ENCODE measurements at regions of chr22 and their contacts with region 1.

Region 1: DNA sequence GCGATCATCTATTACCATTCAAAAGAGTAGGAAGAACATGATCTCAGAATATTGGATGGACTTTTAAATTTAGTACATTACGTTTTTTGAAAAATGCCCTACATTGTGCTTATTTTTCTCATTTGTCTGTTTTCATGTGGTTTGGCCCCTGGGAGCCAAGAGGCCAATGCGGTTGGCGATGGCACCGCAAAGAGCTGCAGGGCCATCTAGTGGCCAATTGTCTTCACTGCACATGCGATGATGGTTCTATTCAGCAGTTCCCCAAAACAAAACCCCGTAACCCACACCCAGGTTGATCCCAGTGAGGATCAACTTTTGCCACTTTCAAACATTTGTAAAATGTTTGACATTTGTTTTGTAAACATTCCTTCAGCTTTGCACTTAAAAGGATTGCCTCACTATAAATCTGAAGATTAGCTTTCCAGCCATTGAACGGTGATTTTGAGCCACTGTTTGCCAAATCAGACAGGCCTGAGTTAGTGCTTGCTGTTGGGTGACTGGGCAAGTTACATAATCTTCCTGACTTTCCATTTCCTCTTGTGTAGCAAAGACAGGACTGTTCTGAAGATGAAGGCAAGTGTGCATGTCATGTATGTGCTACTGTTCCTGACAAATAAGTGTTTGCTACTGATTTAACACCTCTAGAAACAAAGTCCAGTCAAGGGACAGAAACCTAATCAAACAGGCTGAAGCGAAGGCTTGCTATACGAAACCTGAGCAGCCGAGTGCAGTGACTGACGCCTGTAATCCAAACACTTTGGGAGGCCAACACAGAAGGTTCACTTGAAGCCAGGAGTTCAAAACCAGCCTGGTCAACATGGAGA is 29.2 kb upstream of the XBP1 start:
- DNase-seq: peak; percentile 83
- CTCF ChIP-seq: peak; percentile 93

Region 2: DNA sequence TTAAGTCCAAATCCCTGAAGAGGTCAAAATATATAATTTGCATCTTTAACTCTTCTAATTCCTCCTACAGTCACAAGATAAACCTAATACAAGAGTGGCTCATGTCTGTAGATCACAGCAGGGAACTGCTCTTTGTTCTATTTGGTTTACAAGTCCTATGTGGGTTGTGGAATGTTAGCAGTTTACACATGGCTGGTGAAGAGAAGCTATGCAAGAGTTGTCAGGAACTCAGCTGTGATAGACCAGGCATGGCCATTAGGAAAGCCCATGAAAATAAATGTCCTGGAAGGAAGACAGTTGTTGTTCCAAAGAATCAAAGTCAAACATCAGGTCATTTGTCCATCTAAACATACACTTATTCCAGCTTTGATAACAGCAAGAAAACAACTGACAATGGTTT is 598.1 kb before region 1 on chr22:
- CTCF ChIA-PET with region 1: no interaction called
- POLR2A ChIA-PET with region 1: no interaction called
- DNase-seq: no peak
- CTCF ChIP-seq: no peak

Region 3: GRCh38 chr22:28594797-28595462 is 234.6 kb before region 1 on chr22:
- CTCF ChIA-PET with region 1: interaction called, 79 read pairs
- POLR2A ChIA-PET with region 1: no interaction called
- DNase-seq: peak; percentile 41
- CTCF ChIP-seq: peak; percentile 58

Region 4: GRCh38 chr22:28607795-28608194 is 221.8 kb before region 1 on chr22:
- CTCF ChIA-PET with region 1: interaction called, 24 read pairs
- POLR2A ChIA-PET with region 1: no interaction called
- DNase-seq: no peak
- CTCF ChIP-seq: no peak

Region 5: GRCh38 chr22:28800308-28801077 is 29.1 kb before region 1 on chr22 and contains the start of gene XBP1:
- CTCF ChIA-PET with region 1: interaction called, 16 read pairs
- POLR2A ChIA-PET with region 1: interaction called, 3 read pairs
- DNase-seq: peak; percentile 96
- CTCF ChIP-seq: no peak

Region 6: DNA sequence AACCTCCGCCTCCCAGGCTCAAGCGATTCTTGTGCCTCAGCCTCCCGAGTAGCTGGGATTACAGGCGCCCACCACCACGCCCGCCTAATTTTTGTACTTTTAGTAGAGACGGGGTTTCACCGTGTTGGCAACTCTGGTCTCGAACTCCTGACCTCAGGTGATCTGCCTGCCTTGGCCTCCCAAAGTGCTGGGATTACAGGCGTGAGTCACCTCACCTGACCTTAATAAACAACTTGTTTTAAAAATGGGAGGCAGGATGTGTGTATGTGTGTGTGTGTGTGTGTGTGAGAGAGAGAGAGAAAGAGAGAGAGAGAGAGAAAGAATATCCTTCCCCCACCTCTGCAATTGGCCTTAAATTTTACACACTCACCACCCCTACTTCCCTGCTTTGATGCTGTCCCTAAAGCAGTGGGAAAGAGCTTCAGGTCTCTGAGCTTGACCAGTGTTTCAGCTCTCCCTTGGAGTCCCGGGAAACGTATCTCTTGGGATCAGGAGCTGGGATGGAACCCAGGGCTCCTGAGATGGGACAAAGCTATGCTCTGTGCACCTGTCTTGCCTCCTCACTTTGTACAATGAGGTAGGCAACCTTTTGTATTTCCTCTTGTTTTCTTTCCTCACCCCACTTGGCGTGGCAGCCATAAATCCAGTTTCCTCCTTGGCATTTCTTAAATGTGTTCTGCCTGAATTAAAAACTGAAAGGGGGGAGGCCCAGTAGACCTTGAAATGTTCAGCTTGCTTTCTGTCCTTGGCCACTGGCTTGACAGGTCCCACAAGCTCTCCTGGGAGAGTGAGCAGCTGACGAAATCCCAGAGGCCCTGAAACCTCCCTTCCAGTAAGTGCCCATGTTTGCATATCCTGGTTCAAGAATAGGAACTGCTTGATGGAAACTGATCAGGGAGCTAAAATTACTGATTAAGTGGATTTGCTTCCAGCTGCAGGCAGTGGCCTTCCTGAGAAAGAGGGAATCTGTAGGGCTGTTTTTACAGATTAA is 11.4 kb before region 1 on chr22:
- CTCF ChIA-PET with region 1: interaction called, 48 read pairs
- POLR2A ChIA-PET with region 1: interaction called, 9 read pairs
- DNase-seq: no peak
- CTCF ChIP-seq: no peak

Region 7: DNA sequence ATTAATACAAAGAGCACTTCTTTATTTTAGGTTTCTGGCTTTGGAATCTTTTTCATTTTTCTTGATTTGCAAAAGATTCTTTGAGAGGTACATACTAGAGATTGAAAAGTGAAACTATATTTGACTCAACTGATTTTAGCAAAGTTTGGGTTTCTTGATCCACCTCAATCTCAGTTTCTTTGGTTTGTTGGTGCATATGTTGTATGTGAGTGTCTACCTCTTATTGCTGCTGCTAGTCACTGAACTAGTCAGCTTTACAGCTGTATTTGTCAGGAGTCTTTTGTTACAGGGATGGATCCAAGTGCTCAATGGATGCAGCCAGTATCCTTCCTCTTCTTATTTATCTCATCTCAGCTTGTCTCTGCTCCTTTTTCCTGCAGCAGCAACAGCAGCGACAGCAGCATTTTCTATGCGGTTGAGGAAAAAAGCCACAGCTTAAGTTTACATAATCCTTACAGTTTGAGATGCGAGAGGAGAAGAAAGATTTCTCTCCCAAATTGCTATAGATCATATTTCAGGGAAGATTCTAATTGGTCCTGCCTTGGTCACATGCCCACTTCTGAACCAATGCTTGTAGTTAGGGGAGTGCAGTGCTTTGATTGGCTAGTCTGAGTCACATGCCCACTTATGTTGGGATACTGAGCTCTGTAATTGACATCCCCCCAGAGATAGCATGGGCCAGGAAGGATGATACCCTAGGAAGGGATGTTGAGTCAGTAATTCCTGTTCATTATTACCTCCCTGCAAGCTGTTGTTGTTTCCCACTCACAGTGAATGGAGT is 43.8 kb after region 1 on chr22:
- CTCF ChIA-PET with region 1: no interaction called
- POLR2A ChIA-PET with region 1: no interaction called
- DNase-seq: no peak
- CTCF ChIP-seq: no peak

Region 8: DNA sequence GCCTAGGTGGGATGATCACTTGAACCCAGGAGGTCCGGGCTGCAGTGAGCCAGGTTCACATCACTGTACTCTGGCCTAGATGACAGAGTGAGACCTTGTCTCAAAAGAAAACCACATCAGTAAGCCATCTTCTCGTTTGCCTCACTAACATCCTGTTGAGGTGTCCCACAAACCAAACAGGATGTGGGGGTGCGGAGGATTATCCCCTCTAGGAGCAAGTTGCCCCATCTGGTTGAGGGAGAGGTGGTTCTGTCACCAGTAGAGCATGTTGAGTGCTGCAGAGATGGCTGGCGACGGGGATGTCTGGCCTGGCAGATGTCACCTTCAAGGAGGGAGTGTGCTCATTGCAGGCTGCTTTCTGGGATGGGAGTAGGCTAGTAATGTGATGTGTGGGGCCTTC is 126.2 kb after region 1 on chr22:
- CTCF ChIA-PET with region 1: no interaction called
- POLR2A ChIA-PET with region 1: no interaction called
- DNase-seq: peak; percentile 32
- CTCF ChIP-seq: no peak

Measured in GM10248 (cell line).